ENCODE measurements at regions of chr7 and their contacts with region 1.

Region 1: GRCh38 chr7:87152107-87152844 is at the start of gene DMTF1:
- DNase-seq: peak; percentile 98
- H3K4me3 ChIP-seq: peak within 1 kb of the TSS; percentile 73 to 92
- H3K27ac ChIP-seq: peak within 1 kb of the TSS; percentile 96 to 99
- H3K4me1 ChIP-seq: peaks cover 19 to 38% of the 10 kb centered on the region in 2 experiments; a peak in 3 of 4 replicates
- H3K27me3 ChIP-seq: no peaks in the 10 kb centered on the region
- CTCF ChIP-seq: no peak
- EP300 ChIP-seq: peak; percentile 31 to 55; a peak in 3 of 4 replicates
- RAD21 ChIP-seq: no peak
- polyA plus RNA-seq, gene DMTF1: 108 and 177 TPM in 2 replicates

Region 2: DNA sequence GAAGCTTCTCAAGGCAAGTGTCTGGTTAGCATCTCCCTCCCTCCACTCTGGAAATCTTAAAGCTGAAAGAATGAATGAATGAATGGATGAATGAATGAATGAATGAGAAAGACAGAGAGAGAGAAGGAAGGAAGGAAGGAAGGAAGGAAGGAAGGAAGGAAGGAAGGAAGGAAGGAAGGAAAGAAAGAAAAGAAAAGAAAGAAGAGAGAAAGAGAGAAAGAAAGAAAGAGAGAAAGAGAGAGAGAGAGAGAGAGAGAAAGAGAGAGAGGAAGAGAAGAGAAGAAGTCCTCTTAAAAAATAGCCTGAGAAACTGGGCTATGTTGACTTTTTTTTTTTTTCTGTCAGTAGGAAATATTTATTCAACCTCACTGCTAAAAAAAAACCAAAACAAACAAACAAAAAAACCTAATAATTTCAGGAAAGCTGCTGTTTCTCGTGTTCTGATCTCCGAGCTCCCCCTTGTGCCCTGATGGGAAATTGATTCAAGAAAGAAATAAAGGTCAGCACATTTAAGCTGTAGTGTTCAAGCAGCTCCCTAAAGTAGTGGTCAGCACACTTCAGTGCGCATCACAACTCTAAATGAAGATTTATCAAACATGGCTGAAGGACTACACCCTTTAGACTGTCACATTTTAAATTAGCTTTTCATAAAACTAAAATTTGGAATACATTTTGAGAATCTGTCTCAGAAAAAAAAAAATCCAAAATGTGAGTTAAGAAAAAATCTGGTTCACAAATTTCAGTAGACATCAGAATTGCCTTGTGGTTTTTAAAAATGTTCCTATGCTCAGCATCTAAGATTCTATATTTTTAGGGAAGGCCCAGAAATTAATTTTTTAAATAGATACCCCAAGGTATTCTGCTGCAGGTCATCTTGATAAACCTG is 247.1 kb before region 1 on chr7:
- CTCF ChIA-PET with region 1: interaction called, 39 read pairs
- POLR2A ChIA-PET with region 1: no interaction called
- DNase-seq: peak; percentile 15
- H3K4me3 ChIP-seq: no peak overlapping the region
- H3K27ac ChIP-seq: no peak overlapping the region
- H3K4me1 ChIP-seq: peaks cover 0 to 4% of the 10 kb centered on the region in 2 experiments; a peak in 2 of 4 replicates
- H3K27me3 ChIP-seq: no peaks in the 10 kb centered on the region
- CTCF ChIP-seq: peak; percentile 84
- EP300 ChIP-seq: no peak
- RAD21 ChIP-seq: peak; percentile 86

Region 3: DNA sequence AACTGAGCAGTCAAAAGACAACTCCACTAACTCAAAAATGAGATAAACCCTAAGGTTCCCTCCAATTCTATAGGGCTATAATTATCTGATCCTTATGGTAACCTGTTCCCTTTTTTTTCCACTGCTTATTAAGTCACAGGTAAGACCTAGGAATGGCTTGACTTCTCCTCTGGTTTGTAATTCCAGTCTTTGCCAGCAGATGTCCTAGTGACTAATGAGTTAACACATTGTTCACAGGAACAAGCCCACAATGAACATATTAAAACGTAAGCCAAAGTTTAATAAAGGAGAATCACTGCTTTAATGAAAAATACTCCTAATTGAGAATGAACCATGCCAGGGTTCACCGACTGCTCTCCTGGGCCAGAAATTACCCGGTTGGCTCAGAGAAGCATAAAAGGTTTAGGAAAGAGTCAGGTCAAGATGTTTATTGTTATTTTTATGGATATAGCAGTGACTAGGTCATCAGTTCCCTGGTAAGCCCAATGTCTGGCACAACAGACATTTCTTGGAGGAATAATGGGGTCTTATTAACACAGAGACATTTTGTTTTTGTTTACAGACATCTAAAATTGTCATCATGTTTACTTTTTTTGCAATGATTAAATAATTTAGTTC is 213.0 kb before region 1 on chr7:
- CTCF ChIA-PET with region 1: interaction called, 295 read pairs
- POLR2A ChIA-PET with region 1: interaction called, 10 read pairs
- DNase-seq: peak; percentile 36
- H3K4me3 ChIP-seq: no peak overlapping the region
- H3K27ac ChIP-seq: no peak overlapping the region
- H3K4me1 ChIP-seq: peaks cover 0 to 11% of the 10 kb centered on the region in 2 experiments; a peak in 2 of 4 replicates
- H3K27me3 ChIP-seq: no peaks in the 10 kb centered on the region
- CTCF ChIP-seq: peak; percentile 91
- EP300 ChIP-seq: no peak
- RAD21 ChIP-seq: peak; percentile 83

Region 4: DNA sequence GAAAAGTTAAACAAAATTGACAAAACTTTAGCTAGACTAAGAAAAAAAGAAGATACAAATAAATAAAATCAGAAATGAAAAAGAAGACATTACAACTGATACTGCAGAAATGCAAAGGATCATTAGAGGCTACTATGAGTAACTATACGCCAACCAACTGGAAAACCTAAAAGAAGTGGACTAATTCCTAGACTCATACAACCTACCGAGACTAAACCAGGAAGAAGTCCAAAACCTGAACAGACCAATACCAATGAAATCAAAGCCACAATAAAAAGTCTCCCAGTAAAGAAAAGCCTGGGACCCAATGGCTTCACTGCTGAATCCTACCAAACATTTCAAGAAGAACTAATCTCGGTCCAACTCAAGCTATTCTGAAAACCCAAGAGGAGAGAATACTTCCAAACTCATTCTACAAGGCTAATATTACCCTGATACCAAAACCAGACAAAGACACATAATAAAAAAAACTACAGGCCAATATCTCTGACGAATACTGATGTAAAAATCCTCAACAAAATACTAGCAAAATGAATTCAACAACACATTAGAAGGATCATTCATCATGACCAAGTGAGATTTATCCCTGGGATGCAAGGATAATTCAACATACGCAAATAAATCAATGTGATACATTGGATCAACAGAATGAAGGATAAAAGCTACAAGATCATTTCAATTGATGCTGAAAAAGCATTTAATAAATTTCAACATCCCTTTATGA is 113.1 kb before region 1 on chr7:
- CTCF ChIA-PET with region 1: interaction called, 5 read pairs
- POLR2A ChIA-PET with region 1: interaction called, 13 read pairs
- DNase-seq: no peak
- H3K4me3 ChIP-seq: peak overlapping the region; percentile 55 to 71
- H3K27ac ChIP-seq: peak overlapping the region; percentile 59 to 90
- H3K4me1 ChIP-seq: peaks cover 0 to 14% of the 10 kb centered on the region in 2 experiments; a peak in 2 of 4 replicates
- H3K27me3 ChIP-seq: no peaks in the 10 kb centered on the region
- CTCF ChIP-seq: no peak
- EP300 ChIP-seq: no peak
- RAD21 ChIP-seq: no peak

Region 5: GRCh38 chr7:87140271-87140748 is 12.0 kb before region 1 on chr7:
- CTCF ChIA-PET with region 1: interaction called, 21 read pairs
- POLR2A ChIA-PET with region 1: interaction called, 3 read pairs
- DNase-seq: no peak
- H3K4me3 ChIP-seq: no peak overlapping the region
- H3K27ac ChIP-seq: no peak overlapping the region
- H3K4me1 ChIP-seq: no peaks in the 10 kb centered on the region
- H3K27me3 ChIP-seq: no peaks in the 10 kb centered on the region
- CTCF ChIP-seq: no peak
- EP300 ChIP-seq: no peak
- RAD21 ChIP-seq: no peak

Region 6: DNA sequence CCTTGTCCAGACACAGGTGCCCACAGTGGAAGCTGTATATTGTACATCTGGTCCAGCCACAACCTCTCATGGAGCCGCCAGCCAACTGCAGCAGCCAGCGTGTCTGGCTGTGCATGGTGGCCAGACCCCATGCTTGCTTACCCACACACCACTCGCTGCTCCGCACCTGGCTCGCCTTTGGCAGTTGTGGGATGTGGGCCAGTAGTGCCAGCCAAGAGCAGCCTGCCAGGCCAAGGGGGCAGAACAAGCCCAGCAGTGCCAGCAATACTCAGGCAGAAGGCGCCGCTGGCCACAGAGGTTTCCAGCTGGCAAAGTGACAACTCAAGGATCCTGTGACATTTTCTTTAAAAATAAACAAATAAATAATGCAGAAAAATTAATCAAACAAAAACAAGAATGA is 79.0 kb after region 1 on chr7:
- CTCF ChIA-PET with region 1: interaction called, 10 read pairs
- POLR2A ChIA-PET with region 1: interaction called, 4 read pairs
- DNase-seq: peak; percentile 35
- H3K4me3 ChIP-seq: no peak overlapping the region
- H3K27ac ChIP-seq: no peak overlapping the region
- H3K4me1 ChIP-seq: peaks cover 0 to 16% of the 10 kb centered on the region in 2 experiments; a peak in 1 of 4 replicates
- H3K27me3 ChIP-seq: no peaks in the 10 kb centered on the region; the same call in 1 of the 2 replicates
- CTCF ChIP-seq: no peak
- EP300 ChIP-seq: no peak; a peak in 1 of 4 replicates
- RAD21 ChIP-seq: no peak

Measured in SK-N-SH (cell line).